Esophagus squamous epithelium (tissue), 5 donors: ENCODE measurements at regions of chr11 and their contacts with region 1.

Region 1: DNA sequence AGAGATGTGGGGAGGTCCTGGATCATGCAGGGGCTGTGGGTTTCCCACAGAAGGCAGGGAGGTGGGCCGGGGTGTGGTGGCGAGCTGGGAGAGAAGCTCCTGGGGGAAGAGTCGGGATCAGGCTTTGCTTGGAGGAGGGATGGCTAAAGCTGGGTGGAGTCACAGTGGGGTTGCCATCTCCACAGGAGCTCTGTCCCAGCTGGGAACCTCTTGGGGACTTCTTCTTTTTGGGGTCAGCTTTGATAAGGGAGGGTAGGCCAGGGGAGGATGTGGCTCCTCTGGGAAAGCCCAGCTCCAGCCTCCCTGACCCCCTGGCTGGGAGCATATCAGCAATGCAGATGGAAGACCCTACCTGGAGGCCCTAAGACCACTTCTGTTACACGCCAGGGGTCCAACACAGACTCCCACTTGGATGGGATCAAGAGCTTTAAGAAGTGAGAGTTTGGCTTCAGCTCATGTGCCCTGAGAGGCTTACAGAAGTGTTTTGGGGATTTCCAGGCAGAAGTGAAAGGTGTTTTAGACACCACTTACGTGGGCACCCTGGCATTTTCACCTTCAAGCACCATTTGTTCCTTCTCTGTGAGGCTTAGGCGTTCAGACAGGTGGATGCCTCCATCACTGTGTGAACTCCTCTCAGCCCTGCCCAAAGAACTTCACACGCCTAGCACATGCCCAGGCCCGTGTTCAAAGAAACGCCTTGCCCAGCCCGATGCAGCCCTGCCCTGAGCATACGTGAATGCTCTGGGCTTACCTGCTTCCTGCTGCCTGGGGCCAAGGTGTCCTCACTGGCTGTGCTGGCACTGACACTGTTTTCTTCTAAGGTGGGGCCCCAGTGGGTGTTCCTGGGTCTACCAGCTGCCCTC is 33.7 kb downstream of the AMPD3 start:
- DNase-seq: peak; percentile 17
- H3K4me3 ChIP-seq: no peak overlapping the region
- H3K27ac ChIP-seq: peak overlapping the region; percentile 89 to 93 (median 89)
- H3K4me1 ChIP-seq: peaks cover 17 to 45% (median 23%) of the 10 kb centered on the region in 3 donors
- H3K27me3 ChIP-seq: no peaks in the 10 kb centered on the region
- CTCF ChIP-seq: no peak
- POLR2A ChIP-seq: peak in 2 of 4 donors; percentile 5 to 27

Region 2: GRCh38 chr11:10413268-10413667 is 75.5 kb before region 1 on chr11:
- intact Hi-C with region 1: loop called (anchors 10 kb)
- DNase-seq: no peak
- H3K4me3 ChIP-seq: no peak overlapping the region
- H3K27ac ChIP-seq: peak overlapping the region in 3 of 4 donors; percentile 52 to 74 (median 66)
- H3K4me1 ChIP-seq: peaks cover 0 to 63% (median 6%) of the 10 kb centered on the region in 3 donors
- H3K27me3 ChIP-seq: no peaks in the 10 kb centered on the region
- CTCF ChIP-seq: peak in 4 of 6 experiments; percentile 11 to 45 (median 30)
- POLR2A ChIP-seq: no peak

Region 3: GRCh38 chr11:10592331-10592730 is 103.5 kb after region 1 on chr11:
- intact Hi-C with region 1: no loop called
- DNase-seq: no peak
- H3K4me3 ChIP-seq: no peak overlapping the region
- H3K27ac ChIP-seq: peak overlapping the region; percentile 81 to 91 (median 83)
- H3K4me1 ChIP-seq: peaks cover 6 to 81% (median 26%) of the 10 kb centered on the region in 3 donors
- H3K27me3 ChIP-seq: no peaks in the 10 kb centered on the region
- CTCF ChIP-seq: no peak
- POLR2A ChIP-seq: no peak